ENCODE measurements at regions of chr20 and their contacts with region 1.

Region 1: DNA sequence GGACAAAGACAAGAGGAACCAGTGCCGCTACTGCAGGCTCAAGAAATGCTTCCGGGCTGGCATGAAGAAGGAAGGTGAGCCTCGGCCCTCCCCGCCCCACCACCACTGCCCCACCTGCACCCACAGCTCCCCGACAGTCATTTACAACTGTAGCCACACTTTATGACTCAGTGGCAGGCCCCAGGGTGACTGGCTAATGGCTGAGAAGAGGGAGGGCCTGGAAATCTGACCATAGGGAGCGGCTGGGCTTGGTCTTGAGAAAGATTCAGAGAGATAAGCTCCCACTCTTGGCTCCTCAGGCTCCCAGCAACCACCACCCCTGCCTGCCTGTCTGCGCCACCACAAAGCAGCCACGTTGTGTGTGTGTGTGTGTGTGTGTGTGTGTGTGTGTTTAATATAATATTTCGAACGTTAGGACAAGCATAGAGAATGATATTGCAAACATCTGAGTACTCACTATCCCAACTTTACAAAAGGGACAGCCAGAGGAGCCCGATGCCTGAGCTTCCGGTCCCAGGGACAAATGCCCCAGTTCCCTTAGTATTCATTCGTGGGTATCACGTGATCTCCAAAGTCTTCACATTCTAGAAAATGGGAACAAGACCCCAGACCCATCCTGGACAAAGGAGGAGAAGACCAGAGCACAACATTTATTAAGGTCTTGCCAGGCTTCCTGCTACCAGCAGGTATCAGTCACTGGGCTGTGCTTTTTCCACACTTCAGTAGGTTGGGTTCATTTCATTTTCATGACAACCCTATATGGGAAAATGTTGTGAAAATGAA is 52.1 kb downstream of the HNF4A start:
- DNase-seq: no peak
- ATAC-seq: no peak
- H3K4me3 ChIP-seq: no peak overlapping the region
- H3K27ac ChIP-seq: peak overlapping the region; percentile 55
- H3K4me1 ChIP-seq: peaks cover 100% of the 10 kb centered on the region
- H3K27me3 ChIP-seq: no peaks in the 10 kb centered on the region; a peak in 1 of 5 replicates
- CTCF ChIP-seq: no peak
- EP300 ChIP-seq: no peak
- POLR2A ChIP-seq: no peak; a peak in 1 of 4 replicates
- RAD21 ChIP-seq: no peak

Region 2: GRCh38 chr20:44355498-44356352 is 51.9 kb before region 1 on chr20 and contains the start of gene HNF4A:
- CTCF ChIA-PET with region 1: no interaction called
- POLR2A ChIA-PET with region 1: interaction called, 14 read pairs
- in situ Hi-C with region 1: no loop called
- intact Hi-C with region 1: no loop called
- DNase-seq: peak; percentile 92
- ATAC-seq: peak; percentile 91
- H3K4me3 ChIP-seq: peak within 1 kb of the TSS; percentile 69 to 95 (median 92)
- H3K27ac ChIP-seq: peak within 1 kb of the TSS; percentile 73
- H3K4me1 ChIP-seq: peaks cover 76% of the 10 kb centered on the region
- H3K27me3 ChIP-seq: no peaks in the 10 kb centered on the region; a peak in 1 of 5 replicates
- CTCF ChIP-seq: peak; percentile 9; the same call in 1 of the 2 replicates
- EP300 ChIP-seq: peak in 1 of 2 experiments; percentile 50; a peak in 1 of 4 replicates
- POLR2A ChIP-seq: peak; percentile 85 to 98
- RAD21 ChIP-seq: peak; percentile 66
- total RNA-seq, gene HNF4A: 169 and 190 TPM in 2 replicates

Region 3: DNA sequence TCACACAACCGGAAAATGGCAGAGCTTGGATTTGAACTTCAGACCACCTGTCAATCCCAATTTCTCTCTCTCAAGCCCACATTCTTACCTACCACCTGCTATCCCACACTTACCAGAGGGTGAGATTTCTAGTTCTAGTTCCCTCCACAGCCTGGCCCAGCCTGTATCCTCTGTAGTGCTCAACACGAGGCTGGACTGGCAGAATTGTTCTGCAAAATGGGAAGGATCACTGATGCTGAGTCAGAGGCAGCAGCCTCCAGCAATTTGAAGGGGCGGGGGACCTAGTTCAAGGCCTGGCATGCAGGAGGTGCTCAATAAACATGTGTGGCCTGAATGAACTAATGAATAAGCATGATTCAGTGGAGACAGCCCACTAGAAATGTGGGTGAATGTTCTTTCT is 14.5 kb after region 1 on chr20:
- CTCF ChIA-PET with region 1: no interaction called
- POLR2A ChIA-PET with region 1: interaction called, 114 read pairs
- in situ Hi-C with region 1: no loop called
- intact Hi-C with region 1: no loop called
- DNase-seq: no peak
- ATAC-seq: no peak
- H3K4me3 ChIP-seq: no peak overlapping the region
- H3K27ac ChIP-seq: peak overlapping the region; percentile 12
- H3K4me1 ChIP-seq: peaks cover 63% of the 10 kb centered on the region
- H3K27me3 ChIP-seq: no peaks in the 10 kb centered on the region
- CTCF ChIP-seq: no peak
- EP300 ChIP-seq: no peak
- POLR2A ChIP-seq: peak in 1 of 2 experiments; percentile 35; a peak in 1 of 4 replicates
- RAD21 ChIP-seq: no peak

Region 4: DNA sequence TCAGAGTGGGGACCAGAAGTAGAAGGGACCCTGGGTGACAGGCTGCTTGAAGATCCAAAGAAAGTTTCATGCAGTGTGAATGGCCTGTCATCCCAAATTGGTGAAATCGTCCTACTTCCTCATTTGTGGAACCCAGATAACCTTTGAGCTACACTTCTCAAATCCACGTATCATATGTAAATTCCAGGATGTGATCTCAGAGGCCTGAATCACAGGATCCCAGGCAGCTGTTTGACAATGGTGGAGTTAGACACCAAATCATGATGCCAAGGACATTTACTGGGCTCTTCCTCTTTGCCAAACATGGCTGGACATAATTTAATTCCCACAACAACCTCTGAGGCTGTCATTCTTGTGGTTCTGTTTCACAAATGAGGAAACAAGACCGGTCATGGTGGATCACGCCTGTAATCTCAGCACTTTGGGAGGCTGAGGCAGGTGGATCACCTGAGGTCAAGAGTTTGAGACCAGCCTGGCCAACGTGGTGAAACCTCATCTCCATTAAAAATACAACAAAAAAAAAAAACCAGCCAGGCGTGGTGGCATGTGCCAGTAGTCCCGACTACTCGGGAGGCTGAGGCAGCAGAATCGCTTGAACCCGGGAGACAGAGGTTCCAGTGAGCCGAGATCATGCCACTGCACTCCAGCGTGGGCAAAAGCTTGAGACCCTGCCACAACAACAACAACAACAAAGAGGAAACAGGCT is 28.2 kb after region 1 on chr20:
- CTCF ChIA-PET with region 1: no interaction called
- POLR2A ChIA-PET with region 1: interaction called, 107 read pairs
- in situ Hi-C with region 1: no loop called
- intact Hi-C with region 1: loop called (anchors 2 kb)
- DNase-seq: peak; percentile 90
- ATAC-seq: peak; percentile 1; the same call in 2 of the 3 replicates
- H3K4me3 ChIP-seq: no peak overlapping the region
- H3K27ac ChIP-seq: peak overlapping the region; percentile 33
- H3K4me1 ChIP-seq: peaks cover 89% of the 10 kb centered on the region
- H3K27me3 ChIP-seq: no peaks in the 10 kb centered on the region
- CTCF ChIP-seq: no peak
- EP300 ChIP-seq: no peak
- POLR2A ChIP-seq: no peak
- RAD21 ChIP-seq: no peak

Region 5: DNA sequence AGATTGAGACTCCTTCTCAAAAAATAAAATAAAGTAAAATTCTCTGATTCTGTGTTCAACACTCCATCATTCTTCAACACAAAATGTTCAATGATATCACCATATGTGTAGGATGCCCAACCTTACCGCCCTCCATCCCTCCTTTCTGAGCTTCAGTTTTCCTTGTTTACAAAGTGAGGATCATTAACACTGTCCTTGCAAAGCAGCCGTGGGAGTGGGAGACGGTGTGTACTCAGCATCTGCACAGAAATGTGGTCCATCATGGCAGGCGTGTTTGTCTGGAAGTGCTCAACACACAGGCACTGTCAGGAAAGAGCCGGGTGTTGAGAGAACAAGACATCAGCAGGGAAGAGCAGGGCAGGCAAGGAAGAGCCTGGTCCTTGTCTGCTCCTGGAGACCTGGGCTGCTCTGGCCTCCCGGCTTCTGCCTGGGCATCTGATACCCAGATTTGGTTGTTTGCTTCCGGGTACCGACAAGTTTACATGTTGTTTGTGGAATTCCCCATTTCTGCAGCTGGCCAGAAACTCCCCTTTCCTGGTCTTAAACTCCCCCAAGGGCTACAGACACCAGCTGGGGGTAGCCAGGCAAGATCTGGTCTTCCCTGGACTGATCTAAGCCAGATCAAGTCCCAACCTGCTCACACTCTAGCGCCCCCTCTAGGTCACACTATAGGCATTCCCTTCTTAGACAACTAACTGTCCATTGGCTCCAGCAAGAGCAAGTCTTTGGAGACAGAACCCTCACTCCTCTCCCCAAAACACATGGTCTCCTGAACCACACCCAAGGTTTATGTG is 41.4 kb after region 1 on chr20:
- CTCF ChIA-PET with region 1: interaction called, 3 read pairs
- POLR2A ChIA-PET with region 1: interaction called, 12 read pairs
- in situ Hi-C with region 1: no loop called
- intact Hi-C with region 1: no loop called
- DNase-seq: peak; percentile 68
- ATAC-seq: peak; percentile 54
- H3K4me3 ChIP-seq: no peak overlapping the region
- H3K27ac ChIP-seq: no peak overlapping the region
- H3K4me1 ChIP-seq: peaks cover 69% of the 10 kb centered on the region
- H3K27me3 ChIP-seq: no peaks in the 10 kb centered on the region
- CTCF ChIP-seq: peak; percentile 72
- EP300 ChIP-seq: no peak
- POLR2A ChIP-seq: no peak
- RAD21 ChIP-seq: peak; percentile 58

Region 6: DNA sequence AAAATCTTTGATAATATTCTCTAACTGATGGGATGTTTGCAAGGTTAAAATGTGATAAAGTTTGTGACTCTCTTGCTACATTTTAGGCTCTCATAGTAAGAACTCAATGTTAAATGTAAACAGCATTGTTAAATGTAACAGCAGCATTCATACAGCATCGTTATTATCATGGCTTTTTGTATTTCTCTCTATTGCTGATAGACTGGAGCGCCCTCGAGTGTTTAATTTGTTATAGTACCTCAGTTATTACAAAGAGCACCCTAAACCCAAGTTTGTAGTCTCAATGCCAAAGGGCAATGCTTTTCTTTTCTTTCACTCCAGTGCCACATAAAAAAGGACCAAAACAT is 53.2 kb after region 1 on chr20:
- CTCF ChIA-PET with region 1: interaction called, 3 read pairs
- POLR2A ChIA-PET with region 1: interaction called, 11 read pairs
- in situ Hi-C with region 1: no loop called
- intact Hi-C with region 1: no loop called
- DNase-seq: peak; percentile 73
- ATAC-seq: peak; percentile 60
- H3K4me3 ChIP-seq: peak overlapping the region; percentile 6 to 55 (median 18); a peak in 4 of 6 replicates
- H3K27ac ChIP-seq: peak overlapping the region; percentile 58
- H3K4me1 ChIP-seq: peaks cover 69% of the 10 kb centered on the region
- H3K27me3 ChIP-seq: no peaks in the 10 kb centered on the region
- CTCF ChIP-seq: peak; percentile 89
- EP300 ChIP-seq: no peak
- POLR2A ChIP-seq: no peak
- RAD21 ChIP-seq: peak; percentile 82